ENCODE measurements at regions of chr1 and their contacts with region 1.

Region 1: DNA sequence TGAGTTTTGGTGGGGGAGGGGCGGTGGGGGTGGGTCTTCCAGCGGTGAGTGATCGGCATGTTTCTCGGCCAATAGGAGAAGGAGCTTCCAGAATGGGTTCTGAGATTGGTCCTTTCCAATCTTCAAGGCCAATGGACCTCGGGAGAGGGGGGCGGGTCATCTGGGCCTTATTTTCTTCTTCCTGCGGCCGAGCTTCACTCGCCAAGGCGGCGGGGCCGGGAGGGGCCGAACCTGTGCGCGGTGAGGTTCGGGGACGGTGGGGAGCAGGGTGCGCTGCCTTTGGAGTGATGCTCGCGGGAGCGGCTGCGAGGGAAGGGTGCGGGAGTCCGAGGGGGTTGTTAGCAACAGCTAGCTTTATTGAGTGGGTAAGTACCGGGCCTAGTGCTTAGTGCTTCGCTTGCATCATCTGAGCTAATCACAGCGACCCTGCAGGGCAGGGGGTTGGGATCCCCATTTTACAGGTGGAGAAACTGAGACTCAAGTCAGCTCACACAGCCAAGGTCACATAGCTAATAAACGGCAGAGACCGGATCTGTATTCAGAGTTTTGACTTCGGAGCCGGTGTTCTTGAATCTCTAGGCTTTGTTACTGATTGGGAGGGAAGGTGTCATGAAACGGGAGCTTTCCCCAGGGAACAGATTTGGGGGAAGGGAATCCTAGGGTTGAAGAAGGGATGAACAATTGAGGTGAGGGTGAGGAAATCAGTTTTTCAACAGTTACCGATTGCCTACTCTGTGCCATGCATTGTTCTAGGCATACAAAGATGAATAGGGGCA is 549 bp downstream of the KDM4A start:
- DNase-seq: peak; percentile 77 to 98 (median 95)
- H3K4me3 ChIP-seq: peak overlapping the region; percentile 50 to 99 (median 90)
- H3K27ac ChIP-seq: peak overlapping the region; percentile 83 to 100 (median 98)
- H3K27me3 ChIP-seq: no peaks in the 10 kb centered on the region
- CTCF ChIP-seq: peak in 3 of 56 donors; percentile 14 to 18 (median 16)

Region 2: GRCh38 chr1:43444836-43445235 is 205.7 kb before region 1 on chr1:
- intact Hi-C with region 1: loop called in 1 of 2 experiments (anchors 5 kb)
- DNase-seq: peak in 1 of 10 donors; percentile 8
- H3K4me3 ChIP-seq: no peak overlapping the region
- H3K27ac ChIP-seq: no peak overlapping the region
- H3K27me3 ChIP-seq: no peaks in the 10 kb centered on the region
- CTCF ChIP-seq: no peak

Region 3: DNA sequence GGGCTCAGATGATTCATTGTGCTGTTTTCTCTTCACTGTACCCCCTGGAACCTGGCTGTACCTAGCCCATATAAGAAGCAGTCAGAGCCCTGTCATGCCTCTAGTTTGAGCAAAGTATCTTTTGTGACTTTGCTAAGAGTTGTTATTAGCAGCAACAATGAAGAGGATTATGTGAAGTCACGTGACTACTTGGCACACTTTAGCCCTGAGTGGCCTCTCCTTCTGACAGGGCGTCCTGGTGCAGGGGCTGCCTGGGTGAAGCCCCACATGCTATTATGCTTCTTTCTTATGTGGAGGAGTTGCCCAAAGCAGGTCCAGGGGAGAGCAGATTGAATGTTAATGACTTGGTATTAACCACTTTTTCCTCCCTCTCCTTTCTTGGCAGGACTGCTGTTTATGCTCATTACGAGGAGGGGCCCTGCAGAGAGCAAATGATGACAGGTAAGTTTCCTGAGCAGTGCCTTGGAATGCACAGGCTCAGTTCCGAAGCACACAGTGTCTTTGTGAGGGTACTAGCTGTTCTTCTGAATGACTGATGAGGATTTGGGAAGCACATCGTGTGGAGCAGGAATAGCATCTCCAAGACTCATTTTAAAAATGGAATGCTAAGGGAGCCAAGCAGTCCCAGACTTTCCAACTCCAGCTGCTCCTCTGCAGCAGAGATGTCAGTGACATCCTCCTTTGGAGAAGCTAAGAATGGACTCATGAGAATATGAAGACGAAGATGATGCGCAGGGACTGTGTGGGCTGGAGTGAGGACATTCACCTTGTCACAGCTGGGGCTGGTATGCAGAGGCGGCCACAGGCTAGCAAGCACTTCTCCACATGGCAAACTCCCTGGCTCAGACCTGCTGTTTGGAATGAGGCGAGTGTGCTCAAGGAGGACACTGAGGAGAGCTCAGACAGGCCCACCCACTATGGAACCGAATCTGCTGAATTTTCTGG is 41.6 kb after region 1 on chr1:
- intact Hi-C with region 1: loop called in 1 of 2 experiments (anchors 5 kb)
- DNase-seq: peak; percentile 7 to 94 (median 73)
- H3K4me3 ChIP-seq: peak overlapping the region in 1 of 59 donors; percentile 8
- H3K27ac ChIP-seq: peak overlapping the region; percentile 1 to 90 (median 80)
- H3K27me3 ChIP-seq: no peaks in the 10 kb centered on the region
- CTCF ChIP-seq: no peak

Region 4: DNA sequence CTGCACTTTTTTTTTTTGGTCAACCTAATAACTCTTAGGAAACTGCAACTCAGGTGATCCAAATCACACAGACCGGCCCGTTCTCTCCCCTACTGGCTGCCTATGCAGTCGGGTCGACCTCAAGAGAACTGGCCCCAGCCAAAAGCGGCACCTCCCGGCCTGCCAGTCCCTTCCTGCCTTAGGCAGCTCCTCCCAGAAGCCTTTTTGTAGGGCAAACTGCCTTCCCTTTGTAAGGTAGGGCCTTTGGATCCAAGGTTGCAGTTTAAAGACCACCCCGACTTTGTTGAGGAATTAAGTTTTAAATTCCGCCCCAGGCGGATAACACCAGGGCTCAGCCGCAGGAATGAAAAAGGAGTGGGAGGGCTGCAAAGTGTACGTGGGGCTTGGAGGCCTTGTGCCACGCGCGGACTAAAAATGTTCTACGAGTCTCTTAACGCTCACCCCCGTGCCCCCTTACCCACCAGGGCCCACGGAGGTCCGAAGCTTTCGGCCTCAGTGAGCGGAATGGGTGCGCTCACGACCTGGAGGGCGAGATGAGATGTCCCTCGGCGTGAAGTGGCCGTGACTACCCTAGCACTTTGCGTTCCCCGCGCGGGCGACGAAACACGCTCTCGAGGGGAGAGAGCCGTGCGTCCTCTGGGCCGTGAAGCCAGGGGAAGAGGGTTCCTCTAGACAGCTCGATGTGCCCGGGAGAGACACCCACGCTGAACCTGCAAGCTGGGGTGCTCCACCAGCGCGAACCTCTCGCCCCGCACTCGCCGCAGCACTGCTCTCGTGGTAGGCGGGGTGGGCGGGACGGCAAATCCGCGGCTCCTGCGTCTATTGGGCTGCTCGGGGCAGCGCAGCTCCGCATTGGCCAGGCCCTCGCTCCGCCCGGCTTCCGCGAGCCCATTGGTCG is 56.3 kb after region 1 on chr1:
- intact Hi-C with region 1: loop called (anchors 2 to 5 kb)
- DNase-seq: peak; percentile 84 to 96 (median 93)
- H3K4me3 ChIP-seq: peak overlapping the region; percentile 44 to 97 (median 88)
- H3K27ac ChIP-seq: peak overlapping the region in 45 of 59 donors; percentile 2 to 91 (median 71)
- H3K27me3 ChIP-seq: no peaks in the 10 kb centered on the region
- CTCF ChIP-seq: peak in 12 of 56 donors; percentile 12 to 37 (median 20)

Region 5: GRCh38 chr1:43934101-43934985 is 283.8 kb after region 1 on chr1:
- intact Hi-C with region 1: loop called (anchors 10 kb)
- DNase-seq: peak in 9 of 10 donors; percentile 53 to 76 (median 64)
- H3K4me3 ChIP-seq: peak overlapping the region in 11 of 59 donors; percentile 11 to 54 (median 39)
- H3K27ac ChIP-seq: peak overlapping the region in 3 of 59 donors; percentile 1 to 68 (median 5)
- H3K27me3 ChIP-seq: peaks cover 0 to 9% (median 0%) of the 10 kb centered on the region in 45 donors
- CTCF ChIP-seq: peak; percentile 62 to 95 (median 86)

Region 6: DNA sequence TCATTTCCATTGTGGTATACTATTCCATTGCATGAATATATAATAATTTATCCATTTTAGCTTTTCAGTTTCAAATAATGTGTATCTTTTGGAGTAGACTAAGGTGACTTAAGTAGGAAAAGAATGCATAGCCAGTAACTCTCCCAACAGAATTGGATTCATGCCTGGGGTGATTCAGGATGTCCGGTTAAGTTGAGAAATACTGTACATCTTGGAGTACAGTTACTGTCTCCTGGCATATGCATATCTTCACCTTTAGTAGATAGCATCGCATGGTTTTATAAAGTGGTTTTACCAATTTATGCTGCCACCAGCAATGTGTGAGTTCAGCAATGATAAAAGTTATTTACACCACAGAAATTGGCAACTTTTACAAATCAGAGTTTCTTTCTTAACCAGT is 399.3 kb after region 1 on chr1:
- intact Hi-C with region 1: loop called in 1 of 2 experiments (anchors 10 kb)
- DNase-seq: no peak
- H3K4me3 ChIP-seq: no peak overlapping the region
- H3K27ac ChIP-seq: no peak overlapping the region
- H3K27me3 ChIP-seq: no peaks in the 10 kb centered on the region
- CTCF ChIP-seq: no peak

Measured in dorsolateral prefrontal cortex (tissue), 120 donors.